ENCODE measurements at regions of chr7 and their contacts with region 1.

Region 1: DNA sequence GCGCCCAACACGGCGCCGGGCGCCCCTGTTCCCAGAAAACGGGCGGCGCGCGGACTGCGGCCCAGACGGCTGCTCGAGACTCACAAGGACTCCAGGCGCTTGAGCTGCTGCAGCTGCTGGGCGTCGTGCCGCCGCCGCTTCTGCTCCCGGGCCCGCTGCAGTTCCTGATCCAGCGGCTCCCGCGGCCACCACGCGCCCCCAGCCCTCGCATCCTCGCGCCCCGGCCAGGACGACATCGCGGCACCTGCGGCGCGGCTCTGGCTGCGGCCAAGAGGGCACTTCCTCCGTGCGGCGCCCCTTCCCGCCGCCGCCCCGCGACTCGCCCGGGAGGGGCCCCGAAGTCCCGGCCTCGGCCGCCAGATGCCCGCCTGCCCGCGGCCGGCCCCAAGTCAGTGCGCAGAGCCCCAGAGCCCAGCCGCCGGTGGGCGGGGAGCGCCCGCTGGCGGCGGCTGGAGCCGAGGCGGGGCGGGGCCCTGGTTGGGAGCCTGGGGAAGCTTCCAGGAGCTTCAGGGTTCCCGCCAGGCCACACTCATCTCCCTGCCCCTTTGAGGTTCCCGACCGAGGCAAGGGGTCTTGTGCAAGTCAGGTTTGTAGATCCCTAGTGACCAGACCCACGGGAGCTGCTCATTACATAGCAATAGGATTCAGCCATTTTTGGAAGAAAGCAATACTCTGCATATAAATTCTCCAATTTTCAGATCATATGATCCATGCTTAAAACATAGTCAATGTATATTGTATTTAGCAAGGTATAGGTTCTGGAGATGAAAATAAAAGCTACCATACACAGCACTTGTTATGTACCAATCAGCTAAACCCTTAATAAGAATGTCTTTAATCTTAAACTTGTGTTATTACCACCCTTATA is 14.2 kb upstream of the FKBP9 start:
- DNase-seq: peak; percentile 81 to 89
- ATAC-seq: peak; percentile 96 to 97
- H3K4me3 ChIP-seq: peak overlapping the region; percentile 84
- H3K27ac ChIP-seq: peak overlapping the region; percentile 96 to 98
- H3K4me1 ChIP-seq: no peaks in the 10 kb centered on the region
- CTCF ChIP-seq: peak; percentile 74
- EP300 ChIP-seq: no peak
- POLR2A ChIP-seq: peak; percentile 29
- RAD21 ChIP-seq: peak; percentile 33 to 72; a peak in 4 of 5 replicates

Region 2: GRCh38 chr7:32901629-32902028 is 41.4 kb before region 1 on chr7:
- CTCF ChIA-PET with region 1: interaction called, 10 read pairs
- POLR2A ChIA-PET with region 1: interaction called, 7 read pairs
- DNase-seq: no peak
- ATAC-seq: no peak
- H3K4me3 ChIP-seq: no peak overlapping the region
- H3K27ac ChIP-seq: no peak overlapping the region
- H3K4me1 ChIP-seq: no peaks in the 10 kb centered on the region
- CTCF ChIP-seq: no peak
- EP300 ChIP-seq: no peak
- POLR2A ChIP-seq: no peak
- RAD21 ChIP-seq: no peak

Region 3: DNA sequence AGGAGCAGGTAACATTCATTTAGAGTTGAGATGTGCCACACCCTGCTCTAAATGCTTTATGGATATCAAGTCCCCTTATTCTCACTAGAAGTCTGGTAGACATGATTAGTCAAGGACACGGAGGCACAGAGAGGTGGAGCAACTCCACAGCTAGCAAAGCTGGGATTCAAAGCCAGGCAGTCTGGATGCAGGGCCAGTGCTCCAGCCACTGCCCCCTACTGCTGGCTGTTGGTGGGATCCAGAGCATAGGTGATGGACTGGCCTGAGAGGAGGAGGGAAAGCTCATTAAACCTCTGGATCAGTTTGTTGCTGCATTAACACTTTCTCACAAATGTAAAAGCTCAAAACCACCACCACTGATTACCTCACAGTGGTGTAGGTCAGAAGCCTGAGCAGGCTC is 28.8 kb before region 1 on chr7:
- CTCF ChIA-PET with region 1: no interaction called
- POLR2A ChIA-PET with region 1: no interaction called
- DNase-seq: peak in 1 of 2 experiments; percentile 13
- ATAC-seq: peak; percentile 57 to 63; a peak in 4 of 6 replicates
- H3K4me3 ChIP-seq: no peak overlapping the region
- H3K27ac ChIP-seq: no peak overlapping the region
- H3K4me1 ChIP-seq: no peaks in the 10 kb centered on the region
- CTCF ChIP-seq: no peak
- EP300 ChIP-seq: no peak
- POLR2A ChIP-seq: no peak
- RAD21 ChIP-seq: no peak